Cardiac septum (tissue), 1 donor: ENCODE measurements at regions of chr17 and their contacts with region 1.

Region 1: GRCh38 chr17:7306911-7307686 is at the start of gene EIF5A:
- DNase-seq: peak; percentile 100
- total RNA-seq, gene EIF5A: 263 TPM

Region 2: DNA sequence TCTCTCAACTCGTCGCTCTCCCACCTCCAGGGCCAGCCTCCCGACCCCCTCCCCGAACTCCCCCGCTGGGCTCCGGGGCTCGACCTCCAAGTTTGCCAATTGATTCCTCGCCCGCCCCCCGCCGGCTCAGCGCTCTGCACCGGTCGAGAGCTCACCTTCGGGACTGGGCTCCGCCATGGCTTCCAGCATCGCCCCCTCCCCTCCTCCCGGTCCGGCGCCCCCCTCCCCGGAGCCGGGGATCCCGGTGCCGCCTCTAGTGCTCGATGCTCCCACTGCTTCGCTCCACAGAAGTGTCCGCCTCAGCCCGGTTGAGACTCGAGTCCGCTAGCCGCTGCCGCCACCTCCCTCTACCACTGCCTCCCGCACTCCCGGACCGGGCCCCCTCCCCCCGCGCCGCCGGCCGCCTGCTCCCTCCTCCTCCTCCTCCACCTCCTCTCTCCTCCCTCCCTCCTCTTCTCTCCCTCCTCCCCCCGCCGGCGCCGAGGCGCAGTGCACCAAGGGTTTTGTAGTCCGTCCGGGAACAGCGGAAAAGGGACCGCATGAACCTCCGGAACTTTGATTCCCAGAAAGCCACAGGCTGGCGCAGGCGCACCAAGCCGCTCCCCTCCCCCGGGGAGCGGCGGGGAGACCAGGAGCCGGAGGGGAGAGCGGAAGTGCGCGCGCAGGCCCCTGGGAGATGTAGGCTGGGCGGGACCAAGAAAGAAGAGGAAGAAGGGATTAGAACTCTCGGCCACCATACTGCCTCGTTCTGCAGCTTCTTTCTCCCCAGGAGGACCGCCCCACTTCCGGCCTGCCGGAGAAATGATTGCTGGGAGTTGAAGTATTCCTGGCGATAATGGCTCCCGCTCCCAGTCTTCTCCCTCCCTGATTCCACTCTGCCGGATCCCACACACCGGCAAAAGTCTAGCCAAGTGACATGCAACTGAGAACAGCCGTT is 67.7 kb before region 1 on chr17 and contains the start of gene PHF23:
- intact Hi-C with region 1: loop called (anchors 5 kb)
- DNase-seq: peak; percentile 100
- total RNA-seq, gene PHF23: 20.5 TPM

Region 3: GRCh38 chr17:7250695-7251671 is 56.1 kb before region 1 on chr17:
- intact Hi-C with region 1: no loop called
- DNase-seq: no peak

Region 4: DNA sequence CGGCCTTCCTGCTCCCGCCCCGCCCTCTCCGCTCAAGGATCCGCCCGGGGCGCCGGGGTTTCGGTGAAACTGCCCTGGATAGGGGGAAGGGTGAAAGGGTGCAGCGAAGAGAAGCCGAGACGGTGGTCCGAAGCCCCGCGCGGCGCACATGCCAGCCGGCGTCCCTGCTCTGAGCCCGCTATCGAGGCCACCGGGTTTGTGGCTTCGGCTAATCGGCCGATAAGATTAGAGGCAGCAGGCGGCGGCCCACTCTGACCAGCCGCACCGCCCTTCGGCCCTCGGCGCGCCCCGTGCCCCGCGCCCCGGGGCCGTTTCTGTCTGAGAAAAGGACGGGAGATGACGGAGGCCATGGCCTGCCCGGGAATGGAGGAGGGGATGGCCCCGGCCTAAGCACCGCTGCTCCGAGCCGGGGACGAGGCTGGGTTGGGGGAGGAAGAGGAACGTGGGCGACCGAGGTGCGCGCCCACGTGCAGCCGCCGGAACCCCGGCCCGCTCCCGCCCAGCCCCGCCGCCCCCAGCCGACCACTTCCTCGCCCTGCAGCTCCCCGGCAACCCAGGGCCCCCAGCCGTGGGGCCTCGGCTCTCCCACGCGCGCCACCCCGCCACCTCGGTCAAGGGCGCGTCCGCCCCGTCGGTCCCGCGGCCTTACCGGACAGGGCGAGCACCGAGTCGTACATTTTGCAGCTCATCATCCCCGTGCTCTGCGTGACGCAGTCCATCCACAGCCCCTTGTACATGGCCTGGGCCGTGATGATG is 45.7 kb before region 1 on chr17:
- intact Hi-C with region 1: no loop called
- DNase-seq: no peak

Region 5: GRCh38 chr17:7329374-7329996 is 22.4 kb after region 1 on chr17:
- intact Hi-C with region 1: loop called (anchors 2 kb)
- DNase-seq: peak; percentile 98

Region 6: DNA sequence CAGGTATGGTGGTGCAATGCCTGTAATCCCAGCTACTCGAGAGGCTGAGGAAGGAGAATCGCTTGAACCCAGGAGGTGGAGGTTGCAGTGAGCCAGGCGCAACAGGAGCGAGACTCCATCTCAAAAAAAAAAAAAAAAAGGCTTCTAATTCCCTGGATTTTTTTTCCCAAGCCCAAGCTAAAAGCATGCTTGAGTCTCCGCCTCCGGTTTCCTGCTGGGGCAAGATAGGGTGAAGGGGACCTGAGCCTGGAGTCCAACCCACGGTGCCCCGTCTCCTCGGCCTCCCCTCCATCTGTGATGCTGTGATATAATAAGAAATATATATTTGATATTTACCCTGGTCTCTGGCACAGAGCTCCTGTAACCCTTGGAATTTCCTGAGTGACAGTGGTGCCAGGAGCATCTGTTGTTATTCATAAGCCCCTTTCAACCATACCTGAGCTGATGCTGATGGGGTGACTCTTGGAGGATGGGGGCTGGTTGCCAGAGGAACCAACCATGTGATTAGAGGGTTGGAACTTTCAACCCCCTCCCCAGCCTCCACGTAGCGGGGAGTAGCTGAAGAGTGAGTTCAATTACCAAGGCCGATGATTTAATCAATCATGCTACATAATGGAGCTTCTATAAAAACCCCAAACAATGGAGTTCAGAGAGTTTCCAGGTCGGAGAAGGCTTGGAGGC is 61.0 kb after region 1 on chr17:
- intact Hi-C with region 1: no loop called
- DNase-seq: no peak